GM12878 (cell line): ENCODE measurements at regions of chr1 and their contacts with region 1.

Region 1: DNA sequence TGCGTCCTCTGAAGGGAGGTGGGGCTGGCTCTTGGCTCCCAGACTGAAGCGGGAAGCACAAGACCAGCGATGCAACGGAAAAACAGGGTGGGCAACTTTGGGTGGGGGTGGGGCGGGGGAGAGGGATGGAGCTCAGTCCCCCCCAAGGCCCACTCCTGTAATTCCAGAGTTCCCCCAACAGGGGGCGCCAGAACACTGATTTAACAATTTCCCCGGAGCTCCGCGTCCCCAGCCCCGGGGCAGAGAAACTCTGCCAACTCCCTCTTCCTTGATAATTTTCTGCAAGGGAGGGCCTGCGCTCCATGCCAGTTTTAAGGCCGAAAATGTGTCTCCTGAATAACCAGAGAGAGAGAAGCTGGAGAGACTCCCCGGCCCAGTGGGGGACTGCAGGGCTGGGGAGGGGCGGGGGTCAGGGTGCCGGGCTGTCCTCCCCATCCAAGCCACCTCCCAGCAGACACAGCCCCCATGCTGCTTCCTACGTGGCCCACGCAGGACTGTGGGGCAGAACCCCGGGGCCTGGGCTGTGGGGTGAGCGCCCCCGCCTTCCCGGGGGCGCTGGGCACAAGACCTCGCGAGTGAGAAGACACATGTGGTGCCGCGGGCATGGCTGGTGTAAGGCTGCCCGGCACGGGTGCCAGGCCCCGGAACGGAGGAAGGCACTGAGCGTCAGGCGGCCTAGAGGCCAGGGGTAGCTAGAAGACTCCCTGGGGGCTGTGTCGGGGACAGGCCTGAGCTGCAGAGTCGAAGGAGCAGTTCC is 51.4 kb downstream of the KIF21B start:
- DNase-seq: no peak
- ATAC-seq: no peak
- H3K4me3 ChIP-seq: no peak overlapping the region
- H3K27ac ChIP-seq: no peak overlapping the region
- H3K4me1 ChIP-seq: peaks cover 23% of the 10 kb centered on the region
- H3K27me3 ChIP-seq: no peaks in the 10 kb centered on the region
- CTCF ChIP-seq: peak; percentile 62 to 82 (median 75)
- EP300 ChIP-seq: no peak
- POLR2A ChIP-seq: no peak
- RAD21 ChIP-seq: peak; percentile 88

Region 2: GRCh38 chr1:200802865-200803512 is 169.1 kb before region 1 on chr1:
- CTCF ChIA-PET with region 1: interaction called, 11 read pairs
- POLR2A ChIA-PET with region 1: no interaction called
- RAD21 ChIA-PET with region 1: interaction called, 4 read pairs
- SMC1A ChIA-PET with region 1: interaction called, 10 read pairs
- in situ Hi-C with region 1: no loop called
- intact Hi-C with region 1: no loop called
- DNase-seq: peak; percentile 61
- ATAC-seq: peak; percentile 98
- H3K4me3 ChIP-seq: no peak overlapping the region
- H3K27ac ChIP-seq: no peak overlapping the region
- H3K4me1 ChIP-seq: no peaks in the 10 kb centered on the region
- H3K27me3 ChIP-seq: no peaks in the 10 kb centered on the region
- CTCF ChIP-seq: peak; percentile 86 to 92 (median 92)
- EP300 ChIP-seq: no peak
- POLR2A ChIP-seq: no peak
- RAD21 ChIP-seq: peak; percentile 99

Region 3: DNA sequence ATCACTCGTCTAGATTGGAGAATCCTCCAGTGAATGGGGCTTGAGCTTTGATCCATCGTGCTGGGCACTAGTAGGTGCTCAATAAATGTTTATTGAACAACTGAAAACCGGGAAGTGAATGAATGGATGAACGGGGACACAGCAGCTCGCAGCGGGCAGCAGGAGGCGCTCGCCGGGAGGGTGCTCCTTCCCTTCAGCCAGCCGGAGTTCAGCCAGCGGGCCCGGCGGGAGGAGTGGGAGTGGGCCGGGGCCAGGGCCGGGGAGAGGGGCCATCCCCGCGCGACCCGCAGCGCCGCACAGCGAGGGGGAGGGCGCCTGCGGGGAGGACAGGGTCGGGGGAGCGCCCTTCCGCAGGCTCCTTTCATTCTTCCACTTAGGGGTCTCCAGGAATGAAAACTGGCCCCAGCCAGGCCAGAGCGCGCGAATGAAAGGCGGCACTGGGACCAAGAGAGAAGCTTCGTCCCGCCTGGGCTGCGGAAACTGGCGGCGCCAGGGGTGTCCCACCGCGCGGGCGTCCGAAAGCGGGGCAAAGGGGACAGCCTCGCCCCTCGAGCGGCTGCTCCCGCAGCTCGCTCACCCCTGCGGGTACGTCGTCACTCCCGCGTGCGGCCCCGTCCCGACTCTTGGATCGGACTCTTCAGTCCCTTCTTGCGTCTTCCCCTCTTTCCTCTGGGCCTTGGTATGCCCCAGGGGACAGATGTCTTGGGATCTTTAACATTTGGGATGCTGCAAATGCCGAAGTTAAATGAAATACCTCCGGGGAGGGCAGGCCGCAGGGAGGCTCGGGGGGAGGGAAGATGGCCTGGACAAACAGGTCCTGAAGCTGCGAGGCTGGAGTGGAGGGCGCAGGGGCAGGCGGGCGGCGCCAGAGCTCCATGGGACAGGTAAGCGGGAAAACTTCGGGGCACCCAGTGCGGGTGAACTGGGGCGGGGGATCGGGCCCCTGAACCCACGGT is 81.0 kb before region 1 on chr1:
- CTCF ChIA-PET with region 1: interaction called, 112 read pairs
- POLR2A ChIA-PET with region 1: interaction called, 27 read pairs
- RAD21 ChIA-PET with region 1: interaction called, 139 read pairs
- SMC1A ChIA-PET with region 1: interaction called, 107 read pairs
- in situ Hi-C with region 1: no loop called
- intact Hi-C with region 1: loop called (anchors 2 kb)
- DNase-seq: no peak
- ATAC-seq: peak; percentile 5
- H3K4me3 ChIP-seq: peak overlapping the region; percentile 45
- H3K27ac ChIP-seq: peak overlapping the region; percentile 69; the same call in 1 of the 2 replicates
- H3K4me1 ChIP-seq: peaks cover 61% of the 10 kb centered on the region
- H3K27me3 ChIP-seq: no peaks in the 10 kb centered on the region
- CTCF ChIP-seq: peak; percentile 42 to 58 (median 47)
- EP300 ChIP-seq: no peak
- POLR2A ChIP-seq: peak; percentile 53; the same call in 1 of the 2 replicates
- RAD21 ChIP-seq: peak; percentile 26; the same call in 1 of the 2 replicates

Region 4: DNA sequence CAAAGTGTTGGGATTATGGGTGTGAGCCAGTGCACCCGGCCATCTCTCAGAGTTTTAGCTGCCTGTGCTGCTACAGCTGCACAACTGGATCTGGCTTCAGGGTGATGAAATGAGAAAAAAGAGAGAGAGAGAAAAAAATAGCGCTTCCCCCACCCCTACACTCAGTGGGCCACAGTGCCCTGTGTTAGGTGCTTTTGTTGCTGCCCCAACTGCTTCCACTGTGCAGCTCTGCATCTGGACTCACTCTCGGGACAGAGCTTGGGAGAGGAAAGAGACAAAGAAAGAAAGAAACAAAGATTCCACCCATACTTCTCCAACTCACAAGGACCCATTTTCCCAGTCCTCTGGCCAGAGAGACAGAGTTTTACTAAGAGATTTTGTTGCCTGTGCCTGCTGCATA is 27.0 kb before region 1 on chr1:
- CTCF ChIA-PET with region 1: interaction called, 16 read pairs
- POLR2A ChIA-PET with region 1: no interaction called
- RAD21 ChIA-PET with region 1: interaction called, 4 read pairs
- SMC1A ChIA-PET with region 1: interaction called, 3 read pairs
- in situ Hi-C with region 1: no loop called
- intact Hi-C with region 1: no loop called
- DNase-seq: no peak
- ATAC-seq: no peak
- H3K4me3 ChIP-seq: no peak overlapping the region
- H3K27ac ChIP-seq: no peak overlapping the region
- H3K4me1 ChIP-seq: no peaks in the 10 kb centered on the region
- H3K27me3 ChIP-seq: no peaks in the 10 kb centered on the region
- CTCF ChIP-seq: no peak
- EP300 ChIP-seq: no peak
- POLR2A ChIP-seq: no peak
- RAD21 ChIP-seq: no peak

Region 5: GRCh38 chr1:201036188-201036842 is 64.2 kb after region 1 on chr1:
- CTCF ChIA-PET with region 1: interaction called, 199 read pairs
- POLR2A ChIA-PET with region 1: interaction called, 12 read pairs
- RAD21 ChIA-PET with region 1: interaction called, 128 read pairs
- SMC1A ChIA-PET with region 1: interaction called, 83 read pairs
- in situ Hi-C with region 1: loop called (anchors 5 kb)
- intact Hi-C with region 1: no loop called
- DNase-seq: no peak
- ATAC-seq: no peak
- H3K4me3 ChIP-seq: no peak overlapping the region
- H3K27ac ChIP-seq: no peak overlapping the region
- H3K4me1 ChIP-seq: no peaks in the 10 kb centered on the region
- H3K27me3 ChIP-seq: no peaks in the 10 kb centered on the region
- CTCF ChIP-seq: no peak
- EP300 ChIP-seq: no peak
- POLR2A ChIP-seq: no peak
- RAD21 ChIP-seq: no peak

Region 6: DNA sequence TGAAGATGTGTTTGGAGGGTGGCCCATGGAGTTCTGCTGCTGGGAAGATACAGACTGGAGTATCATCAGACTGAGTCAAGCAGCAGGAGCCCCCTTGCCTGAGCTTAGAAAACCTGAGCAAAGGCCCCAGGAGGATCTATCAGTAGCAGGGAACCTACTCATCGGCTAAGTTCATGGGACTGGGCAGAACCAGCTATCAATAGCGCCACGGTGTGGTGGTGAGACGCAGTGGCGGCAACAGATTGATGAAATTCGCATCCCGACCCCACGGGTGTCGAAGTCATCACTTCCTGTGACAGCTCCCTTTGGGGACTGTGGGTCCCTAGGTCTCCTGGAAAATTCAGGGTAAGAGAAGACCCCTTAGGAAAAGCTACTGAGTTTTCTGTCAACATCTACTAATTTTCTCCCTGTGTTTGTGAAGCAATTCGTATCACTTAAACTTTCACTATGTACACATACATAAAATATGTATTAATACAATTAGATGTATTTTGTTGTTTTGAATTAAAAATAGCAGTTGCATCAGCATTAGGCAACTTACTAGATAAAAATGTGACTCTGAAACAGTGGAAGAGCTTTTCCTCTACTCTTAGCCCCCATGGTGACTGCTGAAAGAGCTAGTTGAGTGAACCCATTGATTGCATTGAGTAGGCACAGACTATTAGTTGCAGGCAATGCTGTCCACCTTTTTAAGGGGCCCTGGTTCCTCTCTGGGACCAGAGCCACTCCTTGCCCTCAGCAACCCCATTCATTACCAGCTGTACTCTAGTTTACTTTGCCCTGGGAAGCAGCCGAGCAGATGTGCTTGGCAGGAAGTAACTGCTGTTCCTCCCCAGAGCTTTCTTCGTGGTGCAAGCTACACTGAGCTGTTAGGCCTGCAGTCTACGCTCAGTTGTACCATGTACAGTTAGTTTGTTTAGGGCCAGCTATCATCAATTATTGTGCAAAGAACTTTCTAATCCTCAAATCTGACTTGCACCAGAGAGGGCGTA is 147.4 kb after region 1 on chr1:
- CTCF ChIA-PET with region 1: interaction called, 47 read pairs
- POLR2A ChIA-PET with region 1: no interaction called
- RAD21 ChIA-PET with region 1: interaction called, 21 read pairs
- SMC1A ChIA-PET with region 1: interaction called, 13 read pairs
- in situ Hi-C with region 1: loop called (anchors 5 kb)
- intact Hi-C with region 1: loop called (anchors 1 kb)
- DNase-seq: no peak
- ATAC-seq: peak; percentile 76
- H3K4me3 ChIP-seq: no peak overlapping the region
- H3K27ac ChIP-seq: no peak overlapping the region
- H3K4me1 ChIP-seq: no peaks in the 10 kb centered on the region
- H3K27me3 ChIP-seq: peaks cover 2 to 4% of the 10 kb centered on the region in 2 experiments; a peak in 3 of 4 replicates
- CTCF ChIP-seq: peak; percentile 65 to 77 (median 76)
- EP300 ChIP-seq: no peak
- POLR2A ChIP-seq: no peak
- RAD21 ChIP-seq: peak; percentile 49

Region 7: GRCh38 chr1:201214461-201214860 is 242.3 kb after region 1 on chr1:
- CTCF ChIA-PET with region 1: no interaction called
- POLR2A ChIA-PET with region 1: no interaction called
- RAD21 ChIA-PET with region 1: no interaction called
- SMC1A ChIA-PET with region 1: no interaction called
- in situ Hi-C with region 1: no loop called
- intact Hi-C with region 1: no loop called
- DNase-seq: no peak
- ATAC-seq: peak; percentile 16; the same call in 1 of the 3 replicates
- H3K4me3 ChIP-seq: no peak overlapping the region
- H3K27ac ChIP-seq: no peak overlapping the region
- H3K4me1 ChIP-seq: no peaks in the 10 kb centered on the region
- H3K27me3 ChIP-seq: peaks cover 0 to 1% of the 10 kb centered on the region in 2 experiments; a peak in 2 of 4 replicates
- CTCF ChIP-seq: peak in 1 of 3 experiments; percentile 11; a peak in 1 of 6 replicates
- EP300 ChIP-seq: no peak
- POLR2A ChIP-seq: no peak
- RAD21 ChIP-seq: no peak

Region 8: DNA sequence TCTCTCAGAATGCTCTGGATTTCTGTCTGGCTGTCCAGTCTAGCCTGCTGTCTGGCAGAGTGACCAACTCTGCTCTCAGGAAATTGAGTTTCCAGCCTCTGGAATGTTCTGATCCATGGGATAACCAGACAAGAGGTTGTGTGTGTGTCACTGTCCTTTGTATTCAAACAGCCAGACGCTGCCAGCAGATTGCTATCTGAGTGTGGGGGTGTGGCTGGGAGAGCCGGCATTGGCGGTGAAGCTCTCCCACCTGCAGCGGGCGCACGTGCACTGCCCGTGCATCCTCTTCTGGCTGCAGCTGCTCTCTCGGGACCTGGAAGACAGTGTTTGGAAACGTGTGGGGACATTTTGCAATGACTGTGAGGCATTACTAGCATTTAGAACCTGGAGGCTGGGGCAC is 337.3 kb after region 1 on chr1:
- CTCF ChIA-PET with region 1: no interaction called
- POLR2A ChIA-PET with region 1: no interaction called
- RAD21 ChIA-PET with region 1: no interaction called
- SMC1A ChIA-PET with region 1: no interaction called
- in situ Hi-C with region 1: no loop called
- intact Hi-C with region 1: no loop called
- DNase-seq: no peak
- ATAC-seq: peak; percentile 50; the same call in 2 of the 3 replicates
- H3K4me3 ChIP-seq: no peak overlapping the region
- H3K27ac ChIP-seq: no peak overlapping the region
- H3K4me1 ChIP-seq: no peaks in the 10 kb centered on the region
- H3K27me3 ChIP-seq: peaks cover 4 to 13% of the 10 kb centered on the region in 2 experiments; a peak in 3 of 4 replicates
- CTCF ChIP-seq: peak; percentile 21 to 43 (median 22); a peak in 3 of 6 replicates
- EP300 ChIP-seq: no peak
- POLR2A ChIP-seq: no peak
- RAD21 ChIP-seq: 0 out of 2 replicates have a peak, but pooled peaks have one; percentile 9